ENCODE measurements at regions of chr6 and their contacts with region 1.

Region 1: GRCh38 chr6:53359072-53359842 is 10.5 kb upstream of the ELOVL5 start:
- DNase-seq: peak; percentile 87 to 98
- H3K4me3 ChIP-seq: peak overlapping the region; percentile 53 to 80
- H3K27ac ChIP-seq: peak overlapping the region; percentile 78 to 94
- H3K4me1 ChIP-seq: peaks cover 0 to 4% of the 10 kb centered on the region in 2 donors
- H3K27me3 ChIP-seq: no peaks in the 10 kb centered on the region
- CTCF ChIP-seq: no peak

Region 2: GRCh38 chr6:53348371-53349208 is 10.7 kb before region 1 on chr6 and contains the start of gene ELOVL5:
- intact Hi-C with region 1: loop called (anchors 1 kb)
- DNase-seq: peak; percentile 99 to 100
- H3K4me3 ChIP-seq: peak within 1 kb of the TSS; percentile 93 to 98
- H3K27ac ChIP-seq: peak within 1 kb of the TSS; percentile 99
- H3K4me1 ChIP-seq: peaks cover 0 to 5% of the 10 kb centered on the region in 2 donors
- H3K27me3 ChIP-seq: no peaks in the 10 kb centered on the region
- CTCF ChIP-seq: no peak
- total RNA-seq, gene ELOVL5: 53.7 TPM

Measured in ascending aorta (tissue), 2 donors.